Mammary epithelial cell (primary cell): ENCODE measurements at regions of chr15 and their contacts with region 1.

Region 1: GRCh38 chr15:40886586-40886985 is 7.7 kb upstream of the VPS18 start:
- DNase-seq: no peak
- H3K4me3 ChIP-seq: no peak overlapping the region
- H3K27ac ChIP-seq: no peak overlapping the region
- H3K4me1 ChIP-seq: no peaks in the 10 kb centered on the region
- H3K27me3 ChIP-seq: no peaks in the 10 kb centered on the region
- CTCF ChIP-seq: no peak

Region 2: GRCh38 chr15:40706121-40706520 is 180.5 kb before region 1 on chr15:
- CTCF ChIA-PET with region 1: no interaction called
- dilution Hi-C with region 1: loop called (anchors 5 kb)
- in situ Hi-C with region 1: no loop called
- intact Hi-C with region 1: no loop called
- DNase-seq: no peak
- H3K4me3 ChIP-seq: no peak overlapping the region
- H3K27ac ChIP-seq: no peak overlapping the region
- H3K4me1 ChIP-seq: no peaks in the 10 kb centered on the region
- H3K27me3 ChIP-seq: no peaks in the 10 kb centered on the region
- CTCF ChIP-seq: no peak

Region 3: GRCh38 chr15:40793216-40793989 is 93.2 kb before region 1 on chr15:
- CTCF ChIA-PET with region 1: no interaction called
- dilution Hi-C with region 1: loop called (anchors 5 kb)
- in situ Hi-C with region 1: no loop called
- intact Hi-C with region 1: no loop called
- DNase-seq: peak; percentile 96
- H3K4me3 ChIP-seq: no peak overlapping the region
- H3K27ac ChIP-seq: peak overlapping the region; percentile 44
- H3K4me1 ChIP-seq: peaks cover 17% of the 10 kb centered on the region
- H3K27me3 ChIP-seq: no peaks in the 10 kb centered on the region
- CTCF ChIP-seq: no peak

Region 4: GRCh38 chr15:40957581-40958051 is 71.0 kb after region 1 on chr15:
- CTCF ChIA-PET with region 1: no interaction called
- dilution Hi-C with region 1: no loop called
- in situ Hi-C with region 1: no loop called
- intact Hi-C with region 1: no loop called
- DNase-seq: no peak
- H3K4me3 ChIP-seq: no peak overlapping the region
- H3K27ac ChIP-seq: no peak overlapping the region
- H3K4me1 ChIP-seq: peaks cover 14% of the 10 kb centered on the region
- H3K27me3 ChIP-seq: no peaks in the 10 kb centered on the region
- CTCF ChIP-seq: no peak

Region 5: DNA sequence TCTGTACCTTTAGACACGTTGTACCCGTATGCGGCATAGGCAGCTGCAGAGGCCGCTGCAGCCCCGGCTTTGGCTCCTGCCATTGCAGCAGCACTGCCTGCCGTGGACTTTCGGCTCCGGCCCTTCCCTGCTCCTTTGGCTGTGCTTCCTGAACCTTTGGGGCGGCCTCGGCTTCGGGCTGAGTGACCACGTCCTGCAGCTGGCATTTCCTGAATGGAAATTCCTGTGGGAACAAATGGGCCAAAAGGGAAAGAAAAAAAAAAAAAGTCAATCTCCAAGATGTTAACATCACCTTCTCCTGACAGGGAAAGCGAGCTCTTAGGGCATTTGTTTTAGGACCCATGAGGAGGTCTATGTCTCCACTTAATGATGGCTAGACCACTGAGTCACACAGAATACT is 96.3 kb after region 1 on chr15:
- CTCF ChIA-PET with region 1: no interaction called
- dilution Hi-C with region 1: no loop called
- in situ Hi-C with region 1: no loop called
- intact Hi-C with region 1: no loop called
- DNase-seq: no peak
- H3K4me3 ChIP-seq: no peak overlapping the region
- H3K27ac ChIP-seq: no peak overlapping the region
- H3K4me1 ChIP-seq: no peaks in the 10 kb centered on the region
- H3K27me3 ChIP-seq: no peaks in the 10 kb centered on the region
- CTCF ChIP-seq: no peak

Region 6: GRCh38 chr15:40999190-40999589 is 112.6 kb after region 1 on chr15:
- CTCF ChIA-PET with region 1: no interaction called
- dilution Hi-C with region 1: no loop called
- in situ Hi-C with region 1: no loop called
- intact Hi-C with region 1: no loop called
- DNase-seq: peak; percentile 92
- H3K4me3 ChIP-seq: no peak overlapping the region
- H3K27ac ChIP-seq: peak overlapping the region; percentile 93
- H3K4me1 ChIP-seq: peaks cover 13% of the 10 kb centered on the region
- H3K27me3 ChIP-seq: no peaks in the 10 kb centered on the region
- CTCF ChIP-seq: no peak